Activated CD4-positive, alpha-beta T cell treated with anti-CD3 and anti-CD28 coated beads, Interleukin-2, amount 10 ng/mL, durations not matched to agents 24 days and 14 days (primary cell): ENCODE measurements at regions of chr1 and their contacts with region 1.

Region 1: DNA sequence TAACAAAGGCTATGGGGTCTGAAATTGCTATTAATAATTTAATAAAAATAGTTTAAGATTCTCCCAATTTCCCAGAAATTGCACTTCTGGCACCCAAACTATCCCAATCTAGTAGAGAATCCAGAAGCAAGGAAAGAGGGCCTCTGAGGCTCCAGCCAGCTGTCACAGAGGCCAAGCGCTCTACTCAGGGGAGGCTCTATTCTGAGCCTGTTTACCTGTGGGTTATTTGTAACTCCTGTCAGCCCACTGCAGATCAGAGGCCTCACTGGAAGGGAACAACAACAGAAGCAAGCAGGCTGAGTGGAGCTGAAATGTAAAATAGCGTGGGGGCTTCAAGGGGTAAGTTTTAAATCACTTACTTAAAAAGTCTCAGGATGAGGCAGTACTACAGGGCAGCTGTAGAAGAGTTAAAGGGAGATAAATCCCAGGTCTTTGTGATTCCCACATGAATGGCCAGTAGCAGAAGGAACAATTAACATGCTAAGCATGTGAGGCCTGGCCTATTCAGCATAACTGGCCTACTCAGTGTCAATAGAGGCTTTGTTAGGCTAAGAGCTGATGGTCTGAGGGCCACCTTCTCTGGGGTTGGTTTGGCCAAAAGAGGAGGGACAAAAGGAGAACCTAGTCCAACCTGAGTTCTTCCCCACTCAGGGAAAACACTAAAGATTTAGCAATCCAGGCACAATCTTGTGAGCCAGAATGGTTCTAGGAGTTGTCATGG is 12.8 kb downstream of the ZNF687 start:
- DNase-seq: no peak
- H3K4me3 Mint-ChIP-seq: no peak overlapping the region
- H3K27ac Mint-ChIP-seq: no peak overlapping the region
- H3K4me1 Mint-ChIP-seq: no peaks in the 10 kb centered on the region
- H3K27me3 Mint-ChIP-seq: no peaks in the 10 kb centered on the region

Region 2: GRCh38 chr1:151281969-151282882 is 12.7 kb before region 1 on chr1 and contains the start of gene ZNF687:
- intact Hi-C with region 1: no loop called
- DNase-seq: peak; percentile 99
- H3K4me3 Mint-ChIP-seq: peak within 1 kb of the TSS; percentile 99
- H3K27ac Mint-ChIP-seq: peak within 1 kb of the TSS; percentile 100
- H3K4me1 Mint-ChIP-seq: peaks cover 26% of the 10 kb centered on the region
- H3K27me3 Mint-ChIP-seq: no peaks in the 10 kb centered on the region
- total RNA-seq, gene ZNF687: 25.4 and 26.8 TPM in 2 replicates

Region 3: GRCh38 chr1:151340870-151341754 is 46.2 kb after region 1 on chr1:
- intact Hi-C with region 1: loop called (anchors 1 kb)
- DNase-seq: peak; percentile 88
- H3K4me3 Mint-ChIP-seq: no peak overlapping the region
- H3K27ac Mint-ChIP-seq: peak overlapping the region; percentile 73
- H3K4me1 Mint-ChIP-seq: peaks cover 26% of the 10 kb centered on the region
- H3K27me3 Mint-ChIP-seq: no peaks in the 10 kb centered on the region

Region 4: GRCh38 chr1:151372061-151372934 is 77.4 kb after region 1 on chr1 and contains the start of gene SELENBP1:
- intact Hi-C with region 1: no loop called
- DNase-seq: no peak
- H3K4me3 Mint-ChIP-seq: no peak within 1 kb of the TSS
- H3K27ac Mint-ChIP-seq: no peak within 1 kb of the TSS
- H3K4me1 Mint-ChIP-seq: peaks cover 3% of the 10 kb centered on the region
- H3K27me3 Mint-ChIP-seq: peaks cover 1% of the 10 kb centered on the region
- total RNA-seq, gene SELENBP1: not detected in 2 replicates